ENCODE measurements at regions of chr10 and their contacts with region 1.

Region 1: GRCh38 chr10:17290226-17290625 is 62.2 kb downstream of the VIM start:
- DNase-seq: peak; percentile 44
- H3K4me3 Mint-ChIP-seq: peak overlapping the region; percentile 42
- H3K27ac Mint-ChIP-seq: no peak overlapping the region
- H3K4me1 Mint-ChIP-seq: peaks cover 15% of the 10 kb centered on the region
- H3K27me3 Mint-ChIP-seq: peaks cover 45% of the 10 kb centered on the region
- CTCF ChIP-seq: peak; percentile 37

Region 2: DNA sequence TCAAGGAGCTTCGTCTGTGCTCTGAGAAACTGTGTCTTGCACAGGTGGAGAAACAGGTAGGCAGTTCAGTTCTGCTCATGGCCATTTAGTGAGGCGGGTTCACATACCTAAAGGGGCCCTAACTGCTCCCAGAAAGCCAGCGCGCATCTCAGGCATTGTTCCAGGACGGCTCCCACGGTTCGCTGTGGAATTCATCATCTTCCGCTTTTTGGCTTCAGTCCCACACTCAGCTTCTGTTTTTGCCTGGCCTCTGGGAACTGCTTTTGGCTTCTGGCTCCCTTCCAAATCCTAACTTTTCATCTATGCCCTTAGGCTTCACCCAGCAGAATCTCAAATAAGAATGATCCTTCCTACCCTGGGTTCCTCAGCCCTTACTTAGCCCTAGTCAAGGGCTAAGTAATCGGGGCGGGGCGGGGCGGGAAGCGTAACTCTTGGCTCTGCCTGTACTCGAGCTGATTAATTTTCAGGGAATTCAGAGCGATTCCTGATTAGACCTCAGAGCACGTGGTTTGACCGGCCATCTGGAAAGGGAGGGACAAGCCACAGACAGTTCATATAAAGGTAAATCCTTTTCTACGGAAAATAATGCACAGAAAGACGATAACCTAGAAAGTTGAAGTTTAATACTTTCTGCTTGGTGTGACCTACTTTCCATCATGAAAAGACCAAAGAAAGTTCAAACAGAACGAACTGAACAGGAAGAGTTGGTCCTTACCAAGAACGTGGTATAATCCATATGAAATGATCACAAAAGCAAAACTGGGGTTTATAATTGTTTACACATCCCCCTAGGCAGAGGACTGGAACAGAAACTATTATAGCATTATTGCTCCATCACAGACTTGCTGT is 58.5 kb after region 1 on chr10:
- CTCF ChIA-PET with region 1: no interaction called
- intact Hi-C with region 1: loop called (anchors 2 kb)
- DNase-seq: peak; percentile 36
- H3K4me3 Mint-ChIP-seq: peak overlapping the region; percentile 63
- H3K27ac Mint-ChIP-seq: peak overlapping the region; percentile 91
- H3K4me1 Mint-ChIP-seq: peaks cover 36% of the 10 kb centered on the region
- H3K27me3 Mint-ChIP-seq: no peaks in the 10 kb centered on the region
- CTCF ChIP-seq: no peak

Region 3: GRCh38 chr10:17368708-17369272 is 78.6 kb after region 1 on chr10:
- CTCF ChIA-PET with region 1: no interaction called
- intact Hi-C with region 1: loop called (anchors 5 kb)
- DNase-seq: no peak
- H3K4me3 Mint-ChIP-seq: no peak overlapping the region
- H3K27ac Mint-ChIP-seq: no peak overlapping the region
- H3K4me1 Mint-ChIP-seq: no peaks in the 10 kb centered on the region
- H3K27me3 Mint-ChIP-seq: no peaks in the 10 kb centered on the region
- CTCF ChIP-seq: no peak

Region 4: DNA sequence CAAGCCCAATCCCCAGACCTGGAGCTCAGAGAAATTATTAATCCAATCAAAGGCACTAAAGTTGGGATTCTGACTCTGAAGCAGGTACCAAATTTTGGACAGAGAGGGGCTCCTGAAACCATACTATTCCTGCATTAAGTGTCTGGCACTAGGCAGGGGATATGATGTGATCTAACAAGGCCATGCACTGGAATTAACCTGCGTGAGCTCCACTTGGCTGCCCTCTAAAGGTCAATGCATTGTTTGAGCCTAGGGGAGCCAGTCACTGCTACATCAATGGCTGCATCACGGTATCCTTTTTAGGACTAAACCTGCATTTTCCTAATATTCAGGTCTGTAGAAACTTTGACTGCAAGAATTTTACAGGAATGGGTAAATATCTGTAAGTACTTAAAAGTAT is 122.1 kb after region 1 on chr10:
- CTCF ChIA-PET with region 1: interaction called, 8 read pairs
- intact Hi-C with region 1: loop called (anchors 5 kb)
- DNase-seq: peak; percentile 12
- H3K4me3 Mint-ChIP-seq: no peak overlapping the region
- H3K27ac Mint-ChIP-seq: no peak overlapping the region
- H3K4me1 Mint-ChIP-seq: no peaks in the 10 kb centered on the region
- H3K27me3 Mint-ChIP-seq: peaks cover 22% of the 10 kb centered on the region
- CTCF ChIP-seq: no peak

Region 5: DNA sequence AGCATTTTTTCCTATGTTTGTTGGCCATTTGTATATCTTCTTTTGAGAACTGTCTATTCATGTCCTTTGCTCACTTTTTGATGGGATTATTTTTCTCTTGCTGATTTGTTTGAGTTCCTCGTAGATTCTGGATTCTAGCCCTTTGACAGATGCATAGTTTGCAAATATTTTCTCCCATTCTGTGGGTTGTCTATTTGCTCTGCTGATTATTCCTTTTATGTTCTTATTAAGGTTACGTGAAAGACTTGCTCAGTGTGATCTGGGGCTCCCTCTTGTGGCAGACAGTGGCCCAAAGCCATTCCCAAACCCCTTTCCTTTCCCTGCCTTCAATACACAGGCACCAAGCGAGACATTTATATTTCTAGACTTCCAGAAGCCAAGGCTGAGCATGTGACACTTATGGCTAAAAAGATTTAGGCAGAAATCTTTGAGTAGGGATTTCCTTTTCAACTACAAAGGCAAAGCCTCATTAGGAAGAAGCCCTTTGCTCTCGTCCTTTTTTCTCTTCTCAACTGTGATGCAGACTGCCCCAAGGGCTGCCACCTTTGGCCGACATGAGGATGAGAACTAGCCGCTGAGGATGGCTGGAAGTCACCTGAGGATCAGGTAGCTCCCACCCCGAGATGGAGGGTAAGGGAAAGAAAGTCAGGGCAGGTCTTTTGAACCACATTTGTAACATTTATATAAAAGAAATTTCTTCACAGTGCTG is 140.6 kb after region 1 on chr10:
- CTCF ChIA-PET with region 1: interaction called, 4 read pairs
- intact Hi-C with region 1: loop called (anchors 1 kb)
- DNase-seq: peak; percentile 79
- H3K4me3 Mint-ChIP-seq: no peak overlapping the region
- H3K27ac Mint-ChIP-seq: no peak overlapping the region
- H3K4me1 Mint-ChIP-seq: peaks cover 16% of the 10 kb centered on the region
- H3K27me3 Mint-ChIP-seq: peaks cover 39% of the 10 kb centered on the region
- CTCF ChIP-seq: peak; percentile 77

Region 6: DNA sequence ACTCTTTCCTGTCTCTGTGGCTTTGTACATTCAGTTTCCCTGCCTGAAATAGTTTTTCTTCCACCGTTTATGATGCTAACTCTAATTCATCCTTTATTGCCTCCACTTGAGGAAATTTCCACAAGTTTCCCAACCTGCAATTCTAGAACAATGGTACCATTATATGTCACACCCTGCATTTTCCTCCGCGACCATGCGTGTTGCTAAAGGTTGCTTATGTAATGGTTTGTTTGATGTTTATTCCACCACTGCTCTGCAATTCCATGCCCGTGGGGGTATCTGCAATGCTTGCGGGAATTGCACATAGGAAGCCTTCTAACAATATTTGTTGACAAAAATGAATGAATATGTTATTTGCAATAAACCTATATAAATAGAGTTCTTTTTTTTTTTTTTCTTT is 233.7 kb after region 1 on chr10:
- CTCF ChIA-PET with region 1: no interaction called
- intact Hi-C with region 1: no loop called
- DNase-seq: peak; percentile 9
- H3K4me3 Mint-ChIP-seq: no peak overlapping the region
- H3K27ac Mint-ChIP-seq: no peak overlapping the region
- H3K4me1 Mint-ChIP-seq: peaks cover 27% of the 10 kb centered on the region
- H3K27me3 Mint-ChIP-seq: no peaks in the 10 kb centered on the region
- CTCF ChIP-seq: no peak

Region 7: GRCh38 chr10:17599089-17599488 is 308.9 kb after region 1 on chr10:
- CTCF ChIA-PET with region 1: no interaction called
- intact Hi-C with region 1: loop called (anchors 5 kb)
- DNase-seq: no peak
- H3K4me3 Mint-ChIP-seq: no peak overlapping the region
- H3K27ac Mint-ChIP-seq: no peak overlapping the region
- H3K4me1 Mint-ChIP-seq: no peaks in the 10 kb centered on the region
- H3K27me3 Mint-ChIP-seq: no peaks in the 10 kb centered on the region
- CTCF ChIP-seq: no peak

Region 8: GRCh38 chr10:17742918-17743317 is 452.7 kb after region 1 on chr10:
- CTCF ChIA-PET with region 1: no interaction called
- intact Hi-C with region 1: loop called (anchors 5 kb)
- DNase-seq: peak; percentile 64
- H3K4me3 Mint-ChIP-seq: no peak overlapping the region
- H3K27ac Mint-ChIP-seq: no peak overlapping the region
- H3K4me1 Mint-ChIP-seq: no peaks in the 10 kb centered on the region
- H3K27me3 Mint-ChIP-seq: no peaks in the 10 kb centered on the region
- CTCF ChIP-seq: peak; percentile 67